ENCODE measurements at regions of chr1 and their contacts with region 1.

Region 1: DNA sequence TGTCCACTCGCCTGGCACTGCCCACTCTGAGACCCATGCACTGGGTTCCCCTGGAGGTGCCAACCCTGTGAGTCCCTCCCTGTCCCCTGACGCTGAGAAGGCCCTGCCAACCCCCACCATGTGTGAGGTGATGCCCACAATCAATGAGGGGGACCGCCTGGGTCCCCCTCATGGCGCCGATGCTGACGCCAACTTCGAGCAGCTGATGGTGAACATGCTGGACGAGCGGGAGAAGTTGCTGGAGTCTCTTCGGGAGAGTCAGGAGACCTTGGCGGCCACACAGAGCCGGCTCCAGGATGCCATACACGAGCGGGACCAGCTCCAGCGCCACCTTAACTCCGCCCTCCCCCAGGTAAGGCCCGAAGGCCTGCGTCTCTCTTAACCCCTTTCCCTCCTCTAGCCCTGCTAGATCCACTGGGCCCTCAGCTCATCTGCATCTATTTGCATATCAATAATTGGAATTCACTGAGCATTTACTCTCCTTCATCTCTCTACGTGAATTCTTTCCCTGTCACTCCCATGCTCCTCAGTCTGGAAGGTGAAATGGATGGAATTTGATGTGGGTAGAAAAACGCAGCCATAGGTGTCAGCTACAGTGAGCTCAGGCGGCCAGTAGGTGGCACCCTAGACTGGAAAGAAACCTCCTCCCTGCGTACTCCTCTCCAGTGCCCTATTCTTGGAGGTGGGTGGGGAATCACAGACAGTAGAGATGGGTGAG is 12.8 kb downstream of the PPFIA4 start:
- DNase-seq: peak; percentile 65
- ATAC-seq: peak; percentile 79
- H3K4me3 ChIP-seq: no peak overlapping the region
- H3K27ac ChIP-seq: no peak overlapping the region
- H3K4me1 ChIP-seq: peaks cover 25% of the 10 kb centered on the region
- H3K27me3 ChIP-seq: no peaks in the 10 kb centered on the region
- CTCF ChIP-seq: peak; percentile 90
- POLR2A ChIP-seq: no peak
- RAD21 ChIP-seq: peak; percentile 90

Region 2: GRCh38 chr1:203026031-203026989 is 12.7 kb before region 1 on chr1 and contains the start of gene PPFIA4:
- CTCF ChIA-PET with region 1: interaction called, 10 read pairs
- POLR2A ChIA-PET with region 1: no interaction called
- dilution Hi-C with region 1: no loop called
- in situ Hi-C with region 1: no loop called
- intact Hi-C with region 1: no loop called
- DNase-seq: peak; percentile 75
- ATAC-seq: peak; percentile 92
- H3K4me3 ChIP-seq: peak within 1 kb of the TSS; percentile 70
- H3K27ac ChIP-seq: peak within 1 kb of the TSS; percentile 71
- H3K4me1 ChIP-seq: peaks cover 15% of the 10 kb centered on the region
- H3K27me3 ChIP-seq: peaks cover 12% of the 10 kb centered on the region; the same call in 1 of the 2 replicates
- CTCF ChIP-seq: no peak
- POLR2A ChIP-seq: no peak
- RAD21 ChIP-seq: no peak
- total RNA-seq, gene PPFIA4: 3.6 and 5.4 TPM in 2 replicates

Region 3: GRCh38 chr1:203172128-203173010 is 133.3 kb after region 1 on chr1:
- CTCF ChIA-PET with region 1: interaction called, 20 read pairs
- POLR2A ChIA-PET with region 1: no interaction called
- dilution Hi-C with region 1: no loop called
- in situ Hi-C with region 1: no loop called
- intact Hi-C with region 1: no loop called
- DNase-seq: peak; percentile 32
- ATAC-seq: peak; percentile 75; the same call in 1 of the 2 replicates
- H3K4me3 ChIP-seq: no peak overlapping the region
- H3K27ac ChIP-seq: no peak overlapping the region
- H3K4me1 ChIP-seq: peaks cover 14% of the 10 kb centered on the region
- H3K27me3 ChIP-seq: peaks cover 2% of the 10 kb centered on the region; the same call in 1 of the 2 replicates
- CTCF ChIP-seq: peak; percentile 81
- POLR2A ChIP-seq: no peak
- RAD21 ChIP-seq: peak; percentile 72

Region 4: GRCh38 chr1:203216274-203217138 is 177.5 kb after region 1 on chr1:
- CTCF ChIA-PET with region 1: interaction called, 49 read pairs
- POLR2A ChIA-PET with region 1: no interaction called
- dilution Hi-C with region 1: no loop called
- in situ Hi-C with region 1: loop called (anchors 5 kb)
- intact Hi-C with region 1: loop called (anchors 1 kb)
- DNase-seq: peak; percentile 64
- ATAC-seq: peak; percentile 88
- H3K4me3 ChIP-seq: no peak overlapping the region
- H3K27ac ChIP-seq: no peak overlapping the region
- H3K4me1 ChIP-seq: no peaks in the 10 kb centered on the region
- H3K27me3 ChIP-seq: peaks cover 42% of the 10 kb centered on the region
- CTCF ChIP-seq: peak; percentile 85
- POLR2A ChIP-seq: no peak
- RAD21 ChIP-seq: peak; percentile 86

Region 5: GRCh38 chr1:203340112-203340804 is 301.2 kb after region 1 on chr1:
- CTCF ChIA-PET with region 1: no interaction called
- POLR2A ChIA-PET with region 1: no interaction called
- dilution Hi-C with region 1: no loop called
- in situ Hi-C with region 1: no loop called
- intact Hi-C with region 1: loop called (anchors 10 kb)
- DNase-seq: peak; percentile 84
- ATAC-seq: peak; percentile 90
- H3K4me3 ChIP-seq: no peak overlapping the region
- H3K27ac ChIP-seq: no peak overlapping the region
- H3K4me1 ChIP-seq: no peaks in the 10 kb centered on the region
- H3K27me3 ChIP-seq: peaks cover 43% of the 10 kb centered on the region
- CTCF ChIP-seq: peak; percentile 96
- POLR2A ChIP-seq: 0 out of 2 replicates have a peak, but pooled peaks have one; percentile 30
- RAD21 ChIP-seq: peak; percentile 95

Measured in IMR-90 (cell line).